Activated CD8-positive, alpha-beta T cell treated with anti-CD3 and anti-CD28 coated beads for 36 hours (primary cell): ENCODE measurements at regions of chr3 and their contacts with region 1.

Region 1: GRCh38 chr3:114319453-114319852 is 25.6 kb downstream of the TIGIT start:
- DNase-seq: no peak
- ATAC-seq: no peak
- H3K4me3 Mint-ChIP-seq: peak overlapping the region; percentile 7
- H3K27ac Mint-ChIP-seq: peak overlapping the region; percentile 85
- H3K4me1 Mint-ChIP-seq: peaks cover 87% of the 10 kb centered on the region
- H3K27me3 Mint-ChIP-seq: no peaks in the 10 kb centered on the region
- CTCF ChIP-seq: no peak

Region 2: GRCh38 chr3:114043205-114043604 is 276.2 kb before region 1 on chr3:
- CTCF ChIA-PET with region 1: no interaction called
- POLR2A ChIA-PET with region 1: no interaction called
- intact Hi-C with region 1: no loop called
- DNase-seq: no peak
- ATAC-seq: no peak
- H3K4me3 Mint-ChIP-seq: no peak overlapping the region
- H3K27ac Mint-ChIP-seq: no peak overlapping the region
- H3K4me1 Mint-ChIP-seq: no peaks in the 10 kb centered on the region
- H3K27me3 Mint-ChIP-seq: no peaks in the 10 kb centered on the region
- CTCF ChIP-seq: no peak

Region 3: GRCh38 chr3:114252954-114253353 is 66.5 kb before region 1 on chr3:
- CTCF ChIA-PET with region 1: no interaction called
- POLR2A ChIA-PET with region 1: no interaction called
- intact Hi-C with region 1: no loop called
- DNase-seq: no peak
- ATAC-seq: peak; percentile 73
- H3K4me3 Mint-ChIP-seq: no peak overlapping the region
- H3K27ac Mint-ChIP-seq: peak overlapping the region; percentile 56
- H3K4me1 Mint-ChIP-seq: peaks cover 11% of the 10 kb centered on the region
- H3K27me3 Mint-ChIP-seq: no peaks in the 10 kb centered on the region
- CTCF ChIP-seq: no peak

Region 4: DNA sequence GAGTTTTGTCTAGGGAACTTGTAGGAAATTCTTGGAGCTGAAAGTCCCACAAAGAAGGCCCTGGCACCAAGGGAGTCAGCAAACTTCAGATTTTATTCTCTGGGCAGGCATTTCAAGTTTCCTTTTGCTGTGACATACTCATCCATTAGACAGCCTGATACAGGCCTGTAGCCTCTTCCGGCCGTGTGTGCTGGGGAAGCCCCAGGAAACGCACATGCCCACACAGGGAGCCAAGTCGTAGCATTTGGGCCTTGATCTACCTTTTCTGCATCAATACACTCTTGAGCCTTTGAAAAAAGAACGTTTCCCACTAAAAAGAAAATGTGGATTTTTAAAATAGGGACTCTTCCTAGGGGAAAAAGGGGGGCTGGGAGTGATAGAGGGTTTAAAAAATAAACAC is 10.6 kb before region 1 on chr3:
- CTCF ChIA-PET with region 1: interaction called, 14 read pairs
- POLR2A ChIA-PET with region 1: interaction called, 10 read pairs
- intact Hi-C with region 1: no loop called
- DNase-seq: peak; percentile 71
- ATAC-seq: peak; percentile 72
- H3K4me3 Mint-ChIP-seq: peak overlapping the region; percentile 61
- H3K27ac Mint-ChIP-seq: peak overlapping the region; percentile 96
- H3K4me1 Mint-ChIP-seq: peaks cover 63% of the 10 kb centered on the region
- H3K27me3 Mint-ChIP-seq: no peaks in the 10 kb centered on the region
- CTCF ChIP-seq: no peak

Region 5: GRCh38 chr3:114329823-114330222 is 10.4 kb after region 1 on chr3:
- CTCF ChIA-PET with region 1: interaction called, 15 read pairs
- POLR2A ChIA-PET with region 1: interaction called, 11 read pairs
- intact Hi-C with region 1: no loop called
- DNase-seq: no peak
- ATAC-seq: no peak
- H3K4me3 Mint-ChIP-seq: peak overlapping the region; percentile 12
- H3K27ac Mint-ChIP-seq: peak overlapping the region; percentile 98
- H3K4me1 Mint-ChIP-seq: peaks cover 86% of the 10 kb centered on the region
- H3K27me3 Mint-ChIP-seq: no peaks in the 10 kb centered on the region
- CTCF ChIP-seq: no peak

Region 6: GRCh38 chr3:114336122-114336697 is 16.8 kb after region 1 on chr3:
- CTCF ChIA-PET with region 1: interaction called, 15 read pairs
- POLR2A ChIA-PET with region 1: interaction called, 5 read pairs
- intact Hi-C with region 1: no loop called
- DNase-seq: no peak
- ATAC-seq: no peak
- H3K4me3 Mint-ChIP-seq: no peak overlapping the region
- H3K27ac Mint-ChIP-seq: peak overlapping the region; percentile 97
- H3K4me1 Mint-ChIP-seq: peaks cover 59% of the 10 kb centered on the region
- H3K27me3 Mint-ChIP-seq: no peaks in the 10 kb centered on the region
- CTCF ChIP-seq: peak; percentile 66

Region 7: DNA sequence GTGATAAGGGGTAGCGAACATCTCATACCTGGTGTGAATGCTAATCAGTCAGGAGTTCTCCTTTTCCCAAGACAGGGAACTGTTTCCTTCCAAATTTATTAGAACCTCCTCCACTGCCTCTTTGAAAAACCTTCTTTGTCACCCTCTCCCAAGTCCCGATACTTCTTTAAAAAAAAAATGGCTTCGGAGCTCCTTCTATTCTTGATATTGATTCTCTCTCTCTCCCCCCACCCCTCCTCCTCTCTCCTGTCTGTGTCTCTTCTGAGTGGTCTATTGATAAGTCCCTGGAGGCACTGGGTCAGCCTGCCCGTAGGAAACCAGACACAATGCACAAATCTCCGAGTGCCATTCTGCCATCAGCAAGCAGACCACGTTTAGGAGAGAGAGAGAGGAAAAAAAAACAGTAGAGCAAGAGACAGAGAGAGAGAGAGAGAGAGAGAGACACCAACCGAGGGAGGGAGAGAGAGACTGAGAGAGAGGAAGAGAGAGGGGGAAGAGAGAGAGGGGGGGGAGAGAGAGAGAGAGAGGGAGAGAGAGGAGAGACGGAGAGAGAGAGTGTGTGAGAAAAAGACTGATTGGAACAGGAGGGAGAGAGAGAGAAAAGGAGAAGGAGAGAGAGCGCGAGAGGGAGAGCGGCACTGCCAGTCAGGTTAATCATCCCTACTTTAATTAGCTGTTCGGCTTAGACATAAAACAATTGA is 135.2 kb after region 1 on chr3:
- CTCF ChIA-PET with region 1: no interaction called
- POLR2A ChIA-PET with region 1: no interaction called
- intact Hi-C with region 1: no loop called
- DNase-seq: peak; percentile 6
- ATAC-seq: peak; percentile 53
- H3K4me3 Mint-ChIP-seq: no peak overlapping the region
- H3K27ac Mint-ChIP-seq: no peak overlapping the region
- H3K4me1 Mint-ChIP-seq: peaks cover 13% of the 10 kb centered on the region
- H3K27me3 Mint-ChIP-seq: peaks cover 1% of the 10 kb centered on the region
- CTCF ChIP-seq: no peak

Region 8: GRCh38 chr3:114527036-114527644 is 207.7 kb after region 1 on chr3:
- CTCF ChIA-PET with region 1: no interaction called
- POLR2A ChIA-PET with region 1: no interaction called
- intact Hi-C with region 1: no loop called
- DNase-seq: peak; percentile 8
- ATAC-seq: no peak
- H3K4me3 Mint-ChIP-seq: no peak overlapping the region
- H3K27ac Mint-ChIP-seq: no peak overlapping the region
- H3K4me1 Mint-ChIP-seq: no peaks in the 10 kb centered on the region
- H3K27me3 Mint-ChIP-seq: no peaks in the 10 kb centered on the region
- CTCF ChIP-seq: peak; percentile 66